Panc1 (cell line): ENCODE measurements at regions of chr11 and their contacts with region 1.

Region 1: DNA sequence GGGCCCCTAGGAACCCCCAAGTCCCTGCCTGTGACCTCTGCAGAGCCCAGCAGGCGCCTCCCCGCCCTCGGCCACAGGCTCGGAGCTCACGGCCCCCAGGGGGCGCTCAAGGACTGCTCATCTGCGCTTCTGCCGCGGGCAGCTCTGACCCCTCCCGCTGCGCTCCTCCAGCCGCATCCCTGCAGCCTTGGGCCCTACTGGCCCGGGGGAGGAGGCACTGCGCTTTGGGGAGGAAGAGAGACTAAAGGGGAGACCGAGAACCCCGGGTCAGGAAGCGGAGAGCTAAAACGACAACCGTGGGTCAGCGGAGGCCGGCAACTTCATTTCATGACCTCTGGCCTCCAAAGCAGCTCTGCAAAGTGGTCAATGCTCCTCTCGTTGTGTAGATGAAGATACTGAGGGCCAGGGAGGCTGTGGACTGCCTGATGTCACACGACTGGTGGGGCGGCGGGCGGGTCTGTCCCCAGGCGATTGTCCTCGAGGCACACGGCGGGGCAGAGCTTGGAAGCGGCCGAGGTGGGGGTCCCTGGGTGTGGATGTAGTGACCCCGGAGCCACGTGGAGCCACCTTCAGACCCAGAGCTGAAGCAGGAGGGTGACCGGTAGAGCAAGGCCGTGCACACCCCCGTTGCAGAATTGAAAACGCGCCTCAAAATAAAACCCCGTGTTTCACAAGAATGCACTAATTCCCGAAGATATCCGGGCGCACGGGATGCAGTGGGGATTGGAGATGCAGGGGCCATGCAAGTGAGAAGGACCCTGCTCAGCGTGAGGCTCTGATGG is 2.7 kb upstream of the KRTAP5-6 start:
- DNase-seq: peak; percentile 47
- ATAC-seq: peak; percentile 93
- H3K4me3 ChIP-seq: peak overlapping the region; percentile 35 to 51; a peak in 3 of 4 replicates
- H3K27ac ChIP-seq: peak overlapping the region; percentile 91
- H3K4me1 ChIP-seq: peaks cover 20% of the 10 kb centered on the region
- H3K27me3 ChIP-seq: no peaks in the 10 kb centered on the region
- CTCF ChIP-seq: peak; percentile 87

Region 2: DNA sequence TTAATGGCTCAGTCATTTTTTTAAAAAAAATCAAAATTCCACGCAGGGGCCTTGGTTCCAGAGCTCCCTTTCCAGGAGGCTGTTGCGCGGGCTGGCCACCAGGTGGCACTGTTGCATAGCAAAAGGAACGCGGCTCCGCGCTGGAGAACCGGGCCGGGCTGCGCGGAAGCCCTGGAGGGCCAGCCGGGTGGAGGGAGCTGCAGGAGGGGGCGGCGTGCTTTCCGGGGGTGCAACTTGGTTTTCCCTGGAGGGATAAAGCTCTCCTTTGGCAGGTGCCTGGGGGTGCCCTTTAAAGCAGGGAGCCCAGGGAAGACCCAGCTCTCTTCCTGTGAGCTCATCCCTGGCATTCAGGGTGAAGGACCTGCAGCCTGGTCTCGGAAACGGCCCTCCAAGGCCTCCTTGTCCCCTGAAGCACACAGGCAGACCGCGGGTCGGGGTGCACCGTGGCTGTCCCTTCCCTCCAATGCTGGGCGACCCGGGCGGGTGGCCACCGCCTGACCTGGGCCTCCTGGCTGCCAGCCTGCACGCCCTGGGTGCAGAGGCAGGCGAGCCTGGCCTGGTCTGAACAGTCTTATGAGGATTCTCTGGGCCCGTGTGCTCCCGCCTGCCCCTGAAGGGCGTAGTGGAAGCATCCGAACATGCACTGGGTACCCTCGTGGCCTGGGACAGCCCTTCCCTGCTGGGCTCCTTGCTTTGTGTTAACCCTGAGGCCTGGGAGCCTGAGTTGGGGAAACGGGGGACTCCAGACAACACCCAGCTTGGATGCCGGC is 41.3 kb before region 1 on chr11:
- CTCF ChIA-PET with region 1: interaction called, 27 read pairs
- POLR2A ChIA-PET with region 1: no interaction called
- in situ Hi-C with region 1: no loop called
- intact Hi-C with region 1: loop called (anchors 5 kb)
- DNase-seq: no peak
- ATAC-seq: peak; percentile 88
- H3K4me3 ChIP-seq: no peak overlapping the region
- H3K27ac ChIP-seq: no peak overlapping the region
- H3K4me1 ChIP-seq: 0 out of 2 replicates have a peak, but pooled peaks cover 2% of the 10 kb centered on the region
- H3K27me3 ChIP-seq: no peaks in the 10 kb centered on the region
- CTCF ChIP-seq: peak; percentile 99

Region 3: GRCh38 chr11:1763796-1764661 is 69.8 kb after region 1 on chr11 and contains the start of gene CTSD:
- CTCF ChIA-PET with region 1: interaction called, 10 read pairs
- POLR2A ChIA-PET with region 1: no interaction called
- in situ Hi-C with region 1: no loop called
- intact Hi-C with region 1: no loop called
- DNase-seq: no peak
- ATAC-seq: peak; percentile 73
- H3K4me3 ChIP-seq: peak within 1 kb of the TSS; percentile 88 to 90
- H3K27ac ChIP-seq: peak within 1 kb of the TSS; percentile 94
- H3K4me1 ChIP-seq: peaks cover 69% of the 10 kb centered on the region
- H3K27me3 ChIP-seq: no peaks in the 10 kb centered on the region
- CTCF ChIP-seq: no peak; the same call in 1 of the 2 replicates
- total RNA-seq, gene CTSD: 1,813 TPM

Region 4: DNA sequence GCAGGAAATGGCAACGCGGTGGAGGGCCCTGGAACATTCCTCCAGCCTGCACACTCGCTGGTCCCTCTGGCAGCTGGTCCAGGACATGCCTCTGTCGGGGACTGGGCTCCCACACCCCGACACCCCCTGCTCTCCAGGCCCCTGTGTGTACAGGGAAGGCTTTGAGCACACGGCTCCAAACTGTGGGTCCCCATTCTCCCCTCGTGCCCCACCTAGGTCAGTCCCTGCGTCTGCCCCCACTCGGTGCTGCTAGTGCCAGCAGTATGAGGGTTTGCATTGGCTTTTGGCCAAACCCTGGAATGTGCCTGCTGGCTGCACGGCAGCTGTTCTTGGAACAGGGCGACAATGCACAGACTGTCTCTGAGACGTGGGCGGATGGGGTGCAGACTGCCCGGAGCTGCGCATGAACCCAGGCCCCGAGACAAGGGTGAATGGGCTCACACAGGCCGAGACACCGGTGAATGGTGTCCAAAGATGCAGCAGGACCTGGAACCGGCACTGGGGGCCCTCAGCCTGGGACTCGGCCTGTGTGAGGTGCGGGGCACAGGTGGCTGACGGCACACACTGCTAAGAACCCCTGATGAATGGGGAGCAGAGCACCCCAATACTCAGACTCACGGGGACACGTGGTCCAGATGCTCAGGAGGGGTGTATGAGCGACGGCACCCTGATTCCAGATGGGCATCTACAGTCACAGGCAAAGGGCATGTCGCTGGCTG is 133.0 kb after region 1 on chr11:
- CTCF ChIA-PET with region 1: interaction called, 168 read pairs
- POLR2A ChIA-PET with region 1: no interaction called
- in situ Hi-C with region 1: no loop called
- intact Hi-C with region 1: loop called (anchors 2 kb)
- DNase-seq: no peak
- ATAC-seq: peak; percentile 72
- H3K4me3 ChIP-seq: no peak overlapping the region
- H3K27ac ChIP-seq: peak overlapping the region; percentile 99
- H3K4me1 ChIP-seq: peaks cover 77% of the 10 kb centered on the region
- H3K27me3 ChIP-seq: no peaks in the 10 kb centered on the region
- CTCF ChIP-seq: no peak

Region 5: GRCh38 chr11:1837171-1838076 is 143.2 kb after region 1 on chr11:
- CTCF ChIA-PET with region 1: interaction called, 168 read pairs
- POLR2A ChIA-PET with region 1: no interaction called
- in situ Hi-C with region 1: no loop called
- intact Hi-C with region 1: no loop called
- DNase-seq: no peak
- ATAC-seq: peak; percentile 72
- H3K4me3 ChIP-seq: no peak overlapping the region
- H3K27ac ChIP-seq: no peak overlapping the region
- H3K4me1 ChIP-seq: peaks cover 42% of the 10 kb centered on the region
- H3K27me3 ChIP-seq: no peaks in the 10 kb centered on the region
- CTCF ChIP-seq: peak; percentile 99

Region 6: GRCh38 chr11:1852877-1853276 is 158.6 kb after region 1 on chr11 and contains the start of gene LSP1:
- CTCF ChIA-PET with region 1: no interaction called
- POLR2A ChIA-PET with region 1: no interaction called
- in situ Hi-C with region 1: no loop called
- intact Hi-C with region 1: no loop called
- DNase-seq: no peak
- ATAC-seq: no peak
- H3K4me3 ChIP-seq: no peak within 1 kb of the TSS
- H3K27ac ChIP-seq: no peak within 1 kb of the TSS
- H3K4me1 ChIP-seq: no peaks in the 10 kb centered on the region
- H3K27me3 ChIP-seq: no peaks in the 10 kb centered on the region
- CTCF ChIP-seq: no peak
- total RNA-seq, gene LSP1: 0.90 TPM

Region 7: GRCh38 chr11:2002807-2003206 is 308.6 kb after region 1 on chr11:
- CTCF ChIA-PET with region 1: interaction called, 34 read pairs
- POLR2A ChIA-PET with region 1: no interaction called
- in situ Hi-C with region 1: no loop called
- intact Hi-C with region 1: no loop called
- DNase-seq: no peak
- ATAC-seq: peak; percentile 64
- H3K4me3 ChIP-seq: no peak overlapping the region
- H3K27ac ChIP-seq: no peak overlapping the region
- H3K4me1 ChIP-seq: no peaks in the 10 kb centered on the region
- H3K27me3 ChIP-seq: no peaks in the 10 kb centered on the region
- CTCF ChIP-seq: no peak

Region 8: DNA sequence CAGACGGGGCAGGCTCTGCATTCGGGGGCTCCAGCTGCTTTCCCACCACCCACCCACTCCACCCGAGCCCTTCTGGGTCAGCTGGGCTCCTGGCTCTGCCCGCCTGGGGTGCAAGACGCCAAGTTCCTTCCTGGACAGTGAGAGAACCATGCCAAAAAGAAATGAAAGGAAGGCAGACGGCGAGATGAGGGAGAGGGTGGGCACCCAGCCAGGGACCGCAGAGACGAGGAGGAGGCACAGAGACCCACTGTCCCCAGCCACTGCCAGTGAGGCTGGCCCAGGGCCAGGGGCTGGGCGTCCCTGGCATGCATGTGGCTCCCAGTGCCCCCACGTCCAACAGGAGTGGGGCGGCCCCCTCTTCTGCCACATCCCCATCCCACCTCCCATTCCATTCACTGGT is 672.0 kb after region 1 on chr11:
- CTCF ChIA-PET with region 1: no interaction called
- POLR2A ChIA-PET with region 1: no interaction called
- in situ Hi-C with region 1: no loop called
- intact Hi-C with region 1: no loop called
- DNase-seq: no peak
- ATAC-seq: no peak
- H3K4me3 ChIP-seq: no peak overlapping the region
- H3K27ac ChIP-seq: no peak overlapping the region
- H3K4me1 ChIP-seq: no peaks in the 10 kb centered on the region
- H3K27me3 ChIP-seq: no peaks in the 10 kb centered on the region; the same call in 1 of the 2 replicates
- CTCF ChIP-seq: no peak